ENCODE measurements at regions of chr7 and their contacts with region 1.

Region 1: GRCh38 chr7:101287032-101287431 is 34.6 kb downstream of the IFT22 start:
- DNase-seq: no peak
- H3K4me3 ChIP-seq: no peak overlapping the region
- H3K27ac ChIP-seq: no peak overlapping the region
- H3K4me1 ChIP-seq: no peaks in the 10 kb centered on the region
- H3K27me3 ChIP-seq: no peaks in the 10 kb centered on the region
- CTCF ChIP-seq: no peak
- POLR2A ChIP-seq: no peak

Region 2: GRCh38 chr7:101165075-101165957 is 121.7 kb before region 1 on chr7 and contains the start of gene VGF:
- intact Hi-C with region 1: loop called (anchors 10 kb)
- DNase-seq: peak; percentile 95
- H3K4me3 ChIP-seq: peak within 1 kb of the TSS in 1 of 2 donors; percentile 45
- H3K27ac ChIP-seq: no peak within 1 kb of the TSS
- H3K4me1 ChIP-seq: peaks cover 17% of the 10 kb centered on the region
- H3K27me3 ChIP-seq: no peaks in the 10 kb centered on the region
- CTCF ChIP-seq: no peak
- POLR2A ChIP-seq: no peak
- total RNA-seq, gene VGF: 1.2 to 2.3 TPM

Region 3: DNA sequence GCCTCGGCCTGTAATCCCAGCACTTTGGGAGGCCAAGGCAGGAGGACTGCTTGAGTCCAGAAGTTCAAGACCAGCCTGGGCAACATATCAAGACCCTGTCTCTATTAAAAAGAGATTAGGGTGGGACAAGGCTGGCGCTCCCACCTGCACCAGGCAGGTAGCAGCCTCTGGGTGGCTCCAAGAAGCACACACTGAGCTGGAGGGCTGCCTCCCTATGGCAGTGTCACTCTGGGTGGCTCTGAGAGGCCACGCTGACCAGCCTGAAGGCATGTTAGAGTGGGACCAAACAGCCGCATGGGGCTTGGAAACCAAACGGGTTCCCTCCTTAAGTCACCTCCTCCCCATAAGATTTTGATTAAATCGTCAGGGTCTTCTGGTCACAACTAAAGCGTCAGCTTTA is 55.9 kb after region 1 on chr7:
- intact Hi-C with region 1: no loop called
- DNase-seq: no peak
- H3K4me3 ChIP-seq: no peak overlapping the region
- H3K27ac ChIP-seq: no peak overlapping the region
- H3K4me1 ChIP-seq: no peaks in the 10 kb centered on the region
- H3K27me3 ChIP-seq: no peaks in the 10 kb centered on the region
- CTCF ChIP-seq: no peak
- POLR2A ChIP-seq: no peak